ENCODE measurements at regions of chr5 and their contacts with region 1.

Region 1: GRCh38 chr5:17132444-17133083 is 84.9 kb upstream of the BASP1 start:
- DNase-seq: no peak
- ATAC-seq: peak; percentile 63
- H3K4me3 ChIP-seq: no peak overlapping the region
- H3K27ac ChIP-seq: no peak overlapping the region
- H3K4me1 ChIP-seq: no peaks in the 10 kb centered on the region
- H3K27me3 ChIP-seq: no peaks in the 10 kb centered on the region
- CTCF ChIP-seq: peak; percentile 39 to 58 (median 40); a peak in 4 of 6 replicates
- EP300 ChIP-seq: no peak
- POLR2A ChIP-seq: no peak
- RAD21 ChIP-seq: peak; percentile 36

Region 2: DNA sequence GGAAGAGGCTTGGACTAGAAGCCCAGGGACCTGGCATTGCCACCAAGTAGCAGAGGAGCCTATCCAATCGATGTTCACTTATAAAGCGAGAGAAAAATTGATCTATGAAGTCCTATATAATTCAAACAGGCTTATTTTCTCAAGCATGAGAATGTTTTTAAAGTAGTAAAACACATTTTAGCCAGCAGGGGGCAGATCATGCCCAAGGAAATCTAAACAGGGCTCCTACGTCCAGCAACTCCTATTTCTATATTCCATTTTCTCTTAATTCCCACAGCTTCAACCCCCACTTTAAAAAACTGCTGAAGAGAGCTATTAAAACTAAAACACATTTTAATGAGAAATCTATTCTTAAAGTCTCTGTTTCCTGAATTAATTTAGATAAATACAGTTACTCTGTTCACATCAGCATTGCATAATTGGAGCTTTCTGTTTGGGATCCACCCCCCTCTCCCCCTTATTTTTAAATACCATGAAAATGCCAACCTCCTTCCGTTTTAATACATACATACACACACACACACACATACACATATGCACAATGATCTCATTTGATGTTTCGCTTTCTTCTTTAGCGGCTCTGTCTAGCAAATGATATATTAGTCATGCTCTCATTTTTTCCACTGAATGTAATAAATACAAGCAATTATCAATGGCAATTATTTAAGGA is 341.4 kb before region 1 on chr5:
- CTCF ChIA-PET with region 1: interaction called, 36 read pairs
- POLR2A ChIA-PET with region 1: no interaction called
- RAD21 ChIA-PET with region 1: interaction called, 9 read pairs
- SMC1A ChIA-PET with region 1: interaction called, 10 read pairs
- in situ Hi-C with region 1: loop called (anchors 10 kb)
- intact Hi-C with region 1: loop called (anchors 2 kb)
- DNase-seq: peak; percentile 24
- ATAC-seq: peak; percentile 76
- H3K4me3 ChIP-seq: no peak overlapping the region
- H3K27ac ChIP-seq: no peak overlapping the region
- H3K4me1 ChIP-seq: no peaks in the 10 kb centered on the region; the same call in 1 of the 2 replicates
- H3K27me3 ChIP-seq: no peaks in the 10 kb centered on the region
- CTCF ChIP-seq: peak; percentile 42 to 66 (median 52); a peak in 5 of 6 replicates
- EP300 ChIP-seq: no peak
- POLR2A ChIP-seq: no peak
- RAD21 ChIP-seq: peak; percentile 73

Region 3: DNA sequence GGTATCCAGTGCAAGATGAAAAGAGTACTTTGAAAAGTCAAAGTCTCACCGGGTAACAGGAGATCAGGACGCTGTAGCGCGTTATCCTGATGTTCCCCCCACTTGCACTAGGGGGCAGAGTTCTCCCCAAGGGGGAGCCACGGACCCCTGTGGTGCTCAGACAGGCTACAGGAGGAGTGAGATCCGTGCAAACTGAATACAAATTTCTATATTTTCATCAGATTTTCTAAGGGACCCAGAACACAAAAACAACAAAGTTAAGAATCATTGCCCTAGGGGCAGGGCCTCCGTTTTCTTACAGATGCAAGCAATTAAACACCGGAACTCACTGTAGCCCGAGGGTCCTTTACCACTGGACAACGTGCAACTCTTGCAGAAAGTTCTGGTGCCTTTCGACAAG is 198.4 kb before region 1 on chr5:
- CTCF ChIA-PET with region 1: interaction called, 3 read pairs
- POLR2A ChIA-PET with region 1: no interaction called
- RAD21 ChIA-PET with region 1: no interaction called
- SMC1A ChIA-PET with region 1: interaction called, 4 read pairs
- in situ Hi-C with region 1: no loop called
- intact Hi-C with region 1: loop called (anchors 1 kb)
- DNase-seq: no peak
- ATAC-seq: peak; percentile 77
- H3K4me3 ChIP-seq: no peak overlapping the region
- H3K27ac ChIP-seq: no peak overlapping the region
- H3K4me1 ChIP-seq: no peaks in the 10 kb centered on the region
- H3K27me3 ChIP-seq: peaks cover 0 to 29% of the 10 kb centered on the region in 2 experiments; a peak in 2 of 4 replicates
- CTCF ChIP-seq: peak; percentile 58 to 76 (median 69)
- EP300 ChIP-seq: no peak
- POLR2A ChIP-seq: no peak
- RAD21 ChIP-seq: 0 out of 2 replicates have a peak, but pooled peaks have one; percentile 32

Region 4: DNA sequence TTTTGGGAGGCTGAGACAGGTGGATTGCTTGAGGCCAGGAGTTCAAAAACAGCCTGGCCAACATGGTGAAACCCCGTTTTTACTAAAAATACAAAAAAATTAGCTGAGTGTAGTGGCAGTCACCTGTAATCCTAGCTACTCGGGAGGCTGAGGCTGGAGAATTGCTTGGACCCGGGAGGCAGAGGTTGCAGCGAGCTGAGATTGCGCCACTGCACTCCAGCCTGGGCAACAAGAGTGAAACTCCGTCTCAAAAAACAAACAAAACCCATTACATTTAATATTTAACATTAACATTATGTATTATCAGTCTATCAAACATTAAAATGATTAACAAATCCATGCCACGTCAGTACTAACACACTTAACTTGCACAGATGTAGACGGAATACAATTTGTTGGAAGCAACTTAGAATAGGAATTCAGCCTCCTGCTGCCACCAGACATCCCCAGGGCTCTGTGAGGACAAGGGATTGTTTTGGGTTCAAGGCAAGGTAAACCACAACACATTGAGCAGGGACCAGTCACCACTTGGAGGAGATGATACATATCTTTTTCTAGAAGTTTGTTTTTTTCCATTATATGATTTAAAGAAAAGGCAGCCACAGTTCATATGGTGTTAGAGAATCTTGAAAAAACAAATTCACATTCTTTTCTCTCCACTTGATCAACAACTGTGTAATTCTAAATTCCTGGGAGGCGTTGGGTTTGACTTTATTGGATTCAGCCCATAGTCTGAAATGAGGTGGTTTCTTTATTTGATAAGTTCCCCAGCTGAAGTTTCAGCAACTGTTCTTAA is 19.2 kb before region 1 on chr5:
- CTCF ChIA-PET with region 1: interaction called, 12 read pairs
- POLR2A ChIA-PET with region 1: no interaction called
- RAD21 ChIA-PET with region 1: no interaction called
- SMC1A ChIA-PET with region 1: interaction called, 4 read pairs
- in situ Hi-C with region 1: no loop called
- intact Hi-C with region 1: no loop called
- DNase-seq: no peak
- ATAC-seq: no peak
- H3K4me3 ChIP-seq: no peak overlapping the region
- H3K27ac ChIP-seq: no peak overlapping the region
- H3K4me1 ChIP-seq: no peaks in the 10 kb centered on the region
- H3K27me3 ChIP-seq: no peaks in the 10 kb centered on the region
- CTCF ChIP-seq: no peak
- EP300 ChIP-seq: no peak
- POLR2A ChIP-seq: no peak
- RAD21 ChIP-seq: no peak

Region 5: DNA sequence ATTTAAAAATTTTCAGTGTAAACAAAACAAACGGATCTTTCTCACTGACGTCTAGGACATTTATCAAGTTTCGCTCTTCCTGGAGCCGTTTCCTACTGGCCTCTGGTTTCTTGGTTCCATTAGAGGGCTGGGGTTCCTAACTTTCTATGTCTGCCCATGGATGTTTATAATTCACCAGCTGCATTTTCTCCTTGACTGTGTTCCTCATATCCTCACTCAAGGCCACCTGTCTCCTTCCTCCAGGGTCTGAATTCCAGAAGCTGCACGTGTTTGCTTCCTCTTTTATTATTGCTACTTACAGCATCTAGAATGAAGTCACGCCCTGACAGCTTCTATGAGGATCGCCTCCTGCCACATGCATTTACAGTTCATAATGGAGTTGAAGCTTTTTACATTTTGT is 10.8 kb after region 1 on chr5:
- CTCF ChIA-PET with region 1: interaction called, 18 read pairs
- POLR2A ChIA-PET with region 1: no interaction called
- RAD21 ChIA-PET with region 1: no interaction called
- SMC1A ChIA-PET with region 1: interaction called, 4 read pairs
- in situ Hi-C with region 1: no loop called
- intact Hi-C with region 1: no loop called
- DNase-seq: no peak
- ATAC-seq: no peak
- H3K4me3 ChIP-seq: no peak overlapping the region
- H3K27ac ChIP-seq: no peak overlapping the region
- H3K4me1 ChIP-seq: no peaks in the 10 kb centered on the region
- H3K27me3 ChIP-seq: no peaks in the 10 kb centered on the region
- CTCF ChIP-seq: no peak
- EP300 ChIP-seq: no peak
- POLR2A ChIP-seq: no peak
- RAD21 ChIP-seq: no peak

Region 6: DNA sequence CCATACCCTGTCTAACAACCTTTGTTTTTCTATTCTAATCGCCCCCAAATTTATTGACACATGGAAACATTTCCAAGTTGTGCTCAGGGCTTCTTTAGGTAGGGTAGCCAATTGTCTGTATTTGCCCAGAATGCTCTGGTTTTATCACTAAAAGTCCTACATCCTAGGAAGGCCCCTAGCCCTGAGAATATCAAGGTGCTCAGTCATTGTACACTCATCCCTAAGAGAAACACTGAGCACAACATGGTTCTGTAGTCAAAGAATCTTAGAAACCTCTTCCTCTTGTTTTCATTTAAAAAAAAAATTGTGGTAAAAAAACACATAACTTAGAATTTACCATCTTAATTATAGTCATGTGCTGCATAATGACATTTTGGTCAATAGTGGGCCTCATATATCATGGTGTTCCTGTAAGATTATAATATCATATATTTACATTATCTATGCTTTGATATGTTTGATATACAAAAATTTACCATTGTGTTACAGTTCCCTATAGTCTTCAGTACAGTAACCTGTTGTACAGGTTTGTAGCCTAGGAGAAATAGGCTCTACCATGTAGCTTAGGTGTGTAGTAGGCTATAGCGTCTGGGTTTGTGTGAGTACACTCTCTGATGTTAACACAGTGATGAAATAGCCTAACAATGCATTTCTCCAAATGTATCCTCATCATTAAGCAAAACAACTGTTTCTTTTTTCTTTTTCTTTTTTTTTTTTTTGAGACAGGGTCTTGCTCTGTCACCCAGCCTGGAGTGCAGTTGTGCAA is 16.1 kb after region 1 on chr5:
- CTCF ChIA-PET with region 1: interaction called, 18 read pairs
- POLR2A ChIA-PET with region 1: no interaction called
- RAD21 ChIA-PET with region 1: no interaction called
- SMC1A ChIA-PET with region 1: interaction called, 4 read pairs
- in situ Hi-C with region 1: no loop called
- intact Hi-C with region 1: no loop called
- DNase-seq: no peak
- ATAC-seq: no peak
- H3K4me3 ChIP-seq: no peak overlapping the region
- H3K27ac ChIP-seq: no peak overlapping the region
- H3K4me1 ChIP-seq: no peaks in the 10 kb centered on the region
- H3K27me3 ChIP-seq: no peaks in the 10 kb centered on the region
- CTCF ChIP-seq: no peak
- EP300 ChIP-seq: no peak
- POLR2A ChIP-seq: no peak
- RAD21 ChIP-seq: no peak

Region 7: GRCh38 chr5:17189381-17190036 is 56.9 kb after region 1 on chr5:
- CTCF ChIA-PET with region 1: interaction called, 18 read pairs
- POLR2A ChIA-PET with region 1: no interaction called
- RAD21 ChIA-PET with region 1: no interaction called
- SMC1A ChIA-PET with region 1: no interaction called
- in situ Hi-C with region 1: no loop called
- intact Hi-C with region 1: no loop called
- DNase-seq: peak; percentile 24
- ATAC-seq: peak; percentile 92
- H3K4me3 ChIP-seq: no peak overlapping the region
- H3K27ac ChIP-seq: no peak overlapping the region
- H3K4me1 ChIP-seq: no peaks in the 10 kb centered on the region
- H3K27me3 ChIP-seq: no peaks in the 10 kb centered on the region; a peak in 1 of 4 replicates
- CTCF ChIP-seq: peak; percentile 65 to 80 (median 77)
- EP300 ChIP-seq: no peak
- POLR2A ChIP-seq: no peak
- RAD21 ChIP-seq: peak; percentile 54

Measured in GM12878 (cell line).